Left cardiac atrium (tissue), 4 donors: ENCODE measurements at regions of chr6 and their contacts with region 1.

Region 1: GRCh38 chr6:43933148-43933885 is 163.3 kb downstream of the VEGFA start:
- DNase-seq: no peak
- ATAC-seq: no peak

Region 2: DNA sequence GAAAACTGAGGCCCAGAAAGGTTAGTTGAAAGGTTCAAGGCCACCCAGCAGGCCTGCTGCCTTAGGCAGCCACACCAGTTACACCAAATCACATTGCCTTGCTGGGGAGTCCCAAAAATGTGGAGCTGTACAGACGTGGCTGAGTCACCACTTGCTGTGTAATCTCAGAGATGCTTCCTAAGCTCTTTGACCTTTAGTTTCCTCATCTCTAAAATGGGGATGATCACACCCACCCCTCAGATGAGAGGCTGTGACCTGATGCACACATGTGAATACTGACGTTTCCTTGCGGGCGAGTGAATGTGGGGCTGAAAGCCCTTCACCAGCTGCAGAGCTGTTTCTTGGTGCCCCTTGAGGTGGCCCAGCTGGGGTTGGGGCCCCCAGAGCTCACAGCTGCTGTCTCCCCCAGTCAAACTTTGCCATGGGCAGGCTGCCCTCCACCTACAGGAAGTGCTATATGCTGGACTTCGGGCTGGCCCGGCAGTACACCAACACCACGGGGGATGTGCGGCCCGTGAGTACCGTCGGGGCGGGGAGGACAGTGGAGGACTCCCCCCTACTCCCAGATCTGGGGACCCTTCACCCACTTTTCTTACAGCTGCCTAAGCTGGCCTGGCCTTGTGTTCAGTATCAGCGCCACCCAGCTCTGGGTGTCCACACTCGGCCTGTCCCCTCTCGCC is 679.0 kb before region 1 on chr6:
- intact Hi-C with region 1: no loop called
- DNase-seq: no peak
- ATAC-seq: no peak

Region 3: GRCh38 chr6:43865932-43866645 is 67.2 kb before region 1 on chr6:
- intact Hi-C with region 1: loop called in 1 of 2 experiments (anchors 5 kb)
- DNase-seq: no peak
- ATAC-seq: no peak